ENCODE measurements at regions of chr3 and their contacts with region 1.

Region 1: DNA sequence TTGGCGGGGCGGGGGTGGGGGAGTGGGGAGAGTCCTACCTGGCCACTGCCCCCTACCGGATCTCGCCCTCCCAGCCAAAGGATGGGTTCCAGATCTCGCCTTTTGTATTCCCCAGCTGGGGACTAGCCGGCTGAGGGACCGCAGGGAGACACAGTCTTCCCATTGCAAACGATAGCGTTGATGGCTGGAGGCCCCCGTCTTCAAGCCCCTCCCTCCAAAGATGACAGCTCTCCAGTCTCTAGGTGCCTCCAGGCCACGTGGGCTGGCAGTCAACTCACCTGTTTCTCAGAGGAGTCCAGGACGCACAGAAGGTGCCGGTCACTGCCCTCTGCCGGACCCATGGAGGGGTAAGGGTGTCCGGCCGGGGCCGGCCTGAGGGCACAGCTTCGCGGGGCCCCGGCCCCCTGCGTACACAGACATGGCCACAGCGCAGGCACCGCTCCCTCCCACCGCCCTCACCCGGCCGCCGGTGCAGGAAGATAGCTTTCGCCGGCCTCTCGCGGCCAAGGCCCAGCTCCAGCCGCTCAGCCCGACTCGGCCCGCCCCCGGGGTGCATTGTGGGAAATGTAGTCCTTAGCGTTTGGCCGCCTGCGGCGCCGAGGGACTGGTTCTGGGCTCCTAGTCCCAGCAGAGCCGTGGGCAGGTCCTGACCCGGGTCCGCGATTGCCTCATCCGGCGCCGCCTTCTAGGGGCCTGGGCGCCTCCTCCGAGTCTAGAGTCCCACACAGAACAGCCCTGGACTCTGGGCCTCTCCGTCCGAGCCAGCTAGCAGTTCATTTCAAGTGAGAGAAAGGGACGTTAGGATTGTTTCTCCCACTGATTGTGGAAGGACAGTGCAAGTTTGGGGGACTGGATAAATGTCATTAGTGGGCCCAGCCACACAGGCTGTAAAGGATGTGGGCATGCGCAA is at the start of gene MON1A:
- DNase-seq: peak; percentile 82 to 87
- ATAC-seq: peak; percentile 95 to 96 (median 96)
- H3K4me3 ChIP-seq: peak within 1 kb of the TSS; percentile 76
- H3K4me3 Mint-ChIP-seq: peak within 1 kb of the TSS; percentile 81
- H3K27ac ChIP-seq: peak within 1 kb of the TSS; percentile 66
- H3K27ac Mint-ChIP-seq: peak within 1 kb of the TSS; percentile 72 to 82
- H3K4me1 ChIP-seq: peaks cover 21% of the 10 kb centered on the region
- H3K4me1 Mint-ChIP-seq: peaks cover 13 to 29% of the 10 kb centered on the region in 2 donors
- H3K27me3 ChIP-seq: no peaks in the 10 kb centered on the region
- H3K27me3 Mint-ChIP-seq: no peaks in the 10 kb centered on the region
- CTCF ChIP-seq: no peak
- total RNA-seq, gene MON1A: 3.7 to 8.1 (median 7.9) TPM

Region 2: DNA sequence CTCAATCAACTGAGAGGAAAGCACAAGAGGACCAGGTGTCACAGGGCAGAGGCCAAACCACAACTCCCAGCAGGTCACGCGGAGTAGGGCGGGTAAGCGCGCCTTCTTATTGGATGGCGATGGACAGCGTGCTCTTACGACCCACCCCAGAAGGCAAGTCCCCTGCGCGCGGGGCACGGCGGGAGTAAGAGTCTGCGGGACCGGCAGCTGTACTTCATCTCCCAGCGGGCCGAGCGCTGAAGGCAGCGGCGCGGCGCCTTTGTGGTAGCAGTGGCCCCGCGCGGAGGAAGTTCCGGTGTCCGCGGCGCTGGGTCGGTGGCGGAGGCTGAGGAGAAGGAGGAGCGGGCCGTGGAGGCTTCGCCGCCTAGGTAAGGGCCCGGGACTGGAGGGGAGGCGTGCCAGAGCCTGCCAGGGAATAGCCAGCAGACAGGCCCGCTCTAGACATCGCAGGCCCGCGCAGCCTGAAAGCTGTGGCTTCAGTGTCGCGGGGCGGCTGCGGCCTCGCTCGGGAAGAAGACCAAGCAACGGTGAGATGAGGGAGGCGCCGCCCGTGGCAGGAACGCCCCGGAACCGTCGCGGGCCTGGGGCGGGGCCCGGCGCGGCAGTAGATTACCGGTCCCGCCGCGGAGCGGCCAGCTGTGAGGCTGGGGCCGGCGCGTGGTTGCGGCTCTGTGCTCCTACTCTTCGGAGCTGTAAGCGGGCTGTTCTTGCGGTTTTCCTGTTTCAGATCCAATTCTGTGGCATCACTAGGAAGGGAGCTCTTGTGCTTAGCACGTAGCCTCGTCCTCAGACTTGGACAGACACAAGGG is 10.5 kb after region 1 on chr3 and contains the start of gene RBM6:
- intact Hi-C with region 1: loop called (anchors 1 kb)
- DNase-seq: peak; percentile 87 to 97
- ATAC-seq: peak; percentile 95 to 99 (median 95)
- H3K4me3 ChIP-seq: peak within 1 kb of the TSS; percentile 93
- H3K4me3 Mint-ChIP-seq: peak within 1 kb of the TSS; percentile 99
- H3K27ac ChIP-seq: peak within 1 kb of the TSS; percentile 97
- H3K27ac Mint-ChIP-seq: peak within 1 kb of the TSS; percentile 96 to 99
- H3K4me1 ChIP-seq: peaks cover 28% of the 10 kb centered on the region
- H3K4me1 Mint-ChIP-seq: peaks cover 31 to 33% of the 10 kb centered on the region in 2 donors
- H3K27me3 ChIP-seq: no peaks in the 10 kb centered on the region
- H3K27me3 Mint-ChIP-seq: no peaks in the 10 kb centered on the region
- CTCF ChIP-seq: no peak
- total RNA-seq, gene RBM6: 155 to 193 (median 157) TPM